Aorta (tissue), 5 donors: ENCODE measurements at regions of chr11 and their contacts with region 1.

Region 1: DNA sequence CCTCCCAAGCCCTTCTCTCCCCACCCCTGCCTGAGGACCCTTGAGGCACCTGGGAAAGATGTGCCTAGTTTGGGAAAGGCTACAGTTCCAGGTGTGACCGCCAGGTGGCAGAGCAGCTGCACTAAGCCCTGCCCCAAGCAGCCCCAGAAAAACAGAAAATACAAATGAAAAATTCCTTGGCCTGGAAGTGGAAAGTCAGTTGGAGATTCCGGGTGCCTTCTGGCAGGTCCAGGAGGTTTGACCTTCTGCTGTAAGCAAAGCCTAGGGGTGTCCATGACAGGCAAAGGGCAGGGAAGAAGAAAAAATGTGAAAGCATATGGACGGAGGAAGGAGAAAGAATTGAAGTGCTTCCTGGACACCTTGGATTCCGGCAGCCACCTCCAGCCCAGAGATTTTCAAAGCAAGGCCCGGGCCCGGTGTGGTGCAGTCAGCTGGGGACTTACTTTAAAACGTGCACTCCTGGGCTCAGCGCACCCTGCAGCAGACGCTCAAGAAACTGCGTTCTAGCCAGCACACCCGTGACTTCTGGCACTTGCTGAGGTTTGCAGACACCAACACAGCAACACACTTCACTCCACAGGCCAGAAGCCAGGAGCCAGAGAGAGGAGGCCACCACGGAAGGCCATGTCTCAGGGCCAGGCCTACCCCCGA is 37.3 kb upstream of the SLC22A12 start:
- DNase-seq: peak; percentile 72 to 89
- ATAC-seq: peak; percentile 79
- H3K4me3 ChIP-seq: no peak overlapping the region
- H3K27ac ChIP-seq: peak overlapping the region in 1 of 2 donors; percentile 35
- H3K4me1 ChIP-seq: no peaks in the 10 kb centered on the region
- H3K27me3 ChIP-seq: no peaks in the 10 kb centered on the region

Region 2: GRCh38 chr11:64506731-64507130 is 46.9 kb before region 1 on chr11:
- intact Hi-C with region 1: no loop called
- DNase-seq: no peak
- ATAC-seq: no peak
- H3K4me3 ChIP-seq: no peak overlapping the region
- H3K27ac ChIP-seq: no peak overlapping the region
- H3K4me1 ChIP-seq: no peaks in the 10 kb centered on the region
- H3K27me3 ChIP-seq: no peaks in the 10 kb centered on the region

Region 3: DNA sequence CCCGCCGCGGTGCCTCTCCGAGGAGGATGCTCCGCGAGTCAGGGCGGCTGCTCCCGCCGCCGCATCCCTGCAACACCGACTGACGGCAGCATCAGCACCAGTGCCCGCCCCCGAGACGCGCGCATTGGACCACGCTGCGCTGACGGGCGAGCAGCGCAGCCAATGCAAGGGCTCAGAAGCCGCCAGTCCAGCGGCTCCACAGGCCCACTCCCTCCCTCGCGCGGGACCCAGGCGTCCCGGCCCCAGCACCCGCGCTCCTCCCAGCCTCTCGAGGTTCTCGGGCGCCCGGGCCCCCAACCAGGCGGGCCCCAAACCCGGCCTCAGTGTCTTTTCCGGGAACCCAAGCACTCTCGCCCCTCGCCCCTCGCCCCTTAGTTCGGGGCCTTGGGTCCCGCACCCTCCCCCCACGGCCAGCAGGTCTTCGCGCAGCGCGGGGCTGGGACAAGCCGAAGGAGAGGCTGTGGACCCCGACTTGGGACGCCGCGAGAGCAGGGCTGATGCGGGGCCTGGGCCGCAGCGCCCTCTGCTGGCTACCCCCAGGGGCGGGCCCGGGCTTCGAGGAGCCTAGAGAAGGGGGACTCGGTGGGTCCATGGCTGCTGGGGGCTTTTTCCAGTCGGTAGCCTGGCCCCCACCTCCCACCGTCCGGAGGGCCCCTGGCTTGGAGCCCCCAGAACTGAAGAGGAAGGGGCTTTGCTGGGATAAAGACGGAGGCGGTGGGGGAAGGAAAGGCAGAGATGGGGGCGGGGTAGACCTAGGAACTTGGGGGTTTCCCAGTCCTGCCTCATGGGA is 169.6 kb after region 1 on chr11 and contains the start of gene NRXN2:
- intact Hi-C with region 1: loop called in 1 of 2 experiments (anchors 1 kb)
- DNase-seq: peak; percentile 91 to 95
- ATAC-seq: peak; percentile 92
- H3K4me3 ChIP-seq: peak within 1 kb of the TSS; percentile 48 to 84
- H3K27ac ChIP-seq: no peak within 1 kb of the TSS
- H3K4me1 ChIP-seq: no peaks in the 10 kb centered on the region
- H3K27me3 ChIP-seq: no peaks in the 10 kb centered on the region
- total RNA-seq, gene NRXN2: 21.6 to 35.9 TPM

Region 4: GRCh38 chr11:64814712-64815187 is 261.1 kb after region 1 on chr11:
- intact Hi-C with region 1: no loop called
- DNase-seq: no peak
- ATAC-seq: no peak
- H3K4me3 ChIP-seq: no peak overlapping the region
- H3K27ac ChIP-seq: no peak overlapping the region
- H3K4me1 ChIP-seq: no peaks in the 10 kb centered on the region
- H3K27me3 ChIP-seq: no peaks in the 10 kb centered on the region